A549 (cell line): ENCODE measurements at regions of chr16 and their contacts with region 1.

Region 1: DNA sequence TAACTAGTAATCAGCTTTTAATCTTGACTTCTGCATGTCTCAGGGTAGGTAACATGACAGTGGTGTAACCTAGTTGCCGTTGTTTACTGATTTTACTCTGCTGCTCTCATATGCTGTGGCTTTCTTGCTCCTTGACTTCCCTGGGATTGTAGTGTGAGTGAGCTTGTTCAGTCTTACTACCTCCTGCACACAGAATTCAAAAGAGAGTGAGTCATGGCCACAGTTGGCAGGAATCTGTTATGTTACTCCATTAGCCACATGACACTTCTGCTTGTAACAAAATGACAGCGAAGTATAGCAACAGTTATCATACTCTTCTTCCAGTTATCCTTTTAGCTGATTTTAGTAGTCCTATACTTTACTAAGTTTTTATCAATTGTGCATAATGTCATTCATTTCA is 18.8 kb downstream of the TNRC6A start:
- DNase-seq: peak; percentile 29 to 35
- ATAC-seq: peak; percentile 82 to 83; a peak in 5 of 6 replicates
- H3K4me3 ChIP-seq: no peak overlapping the region
- H3K27ac ChIP-seq: no peak overlapping the region
- H3K4me1 ChIP-seq: peaks cover 30% of the 10 kb centered on the region
- CTCF ChIP-seq: no peak
- EP300 ChIP-seq: no peak
- POLR2A ChIP-seq: no peak
- RAD21 ChIP-seq: no peak

Region 2: DNA sequence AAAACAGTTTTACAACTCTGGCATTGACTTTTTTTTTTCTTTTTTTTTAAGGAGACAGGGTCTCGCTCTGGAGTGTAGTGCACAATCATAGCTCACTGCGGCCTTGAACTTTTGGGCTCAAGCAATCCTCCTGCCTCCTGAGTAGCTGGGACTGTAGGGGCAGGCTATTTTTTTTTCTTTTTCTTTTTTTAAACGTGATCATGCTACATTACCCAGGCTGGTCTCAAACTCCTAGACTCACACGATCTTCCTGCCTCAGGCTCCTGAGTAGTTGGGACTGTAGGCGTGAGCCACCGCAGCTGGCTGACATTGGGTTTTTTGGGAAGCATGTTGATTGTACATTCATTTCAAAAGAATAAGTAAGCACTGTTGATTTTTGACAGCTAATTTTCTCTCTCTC is 13.3 kb after region 1 on chr16:
- CTCF ChIA-PET with region 1: interaction called, 11 read pairs
- POLR2A ChIA-PET with region 1: no interaction called
- DNase-seq: no peak
- ATAC-seq: no peak
- H3K4me3 ChIP-seq: no peak overlapping the region
- H3K27ac ChIP-seq: no peak overlapping the region
- H3K4me1 ChIP-seq: peaks cover 19% of the 10 kb centered on the region; the same call in 2 of the 3 replicates
- CTCF ChIP-seq: no peak
- EP300 ChIP-seq: no peak
- POLR2A ChIP-seq: no peak
- RAD21 ChIP-seq: no peak